Activated naive CD4-positive, alpha-beta T cell treated with anti-CD3 and anti-CD28 coated beads for 36 hours (primary cell): ENCODE measurements at regions of chr15 and their contacts with region 1.

Region 1: GRCh38 chr15:84955089-84955848 is 26.4 kb upstream of the PDE8A start:
- DNase-seq: peak; percentile 69
- H3K4me3 Mint-ChIP-seq: no peak overlapping the region
- H3K27ac Mint-ChIP-seq: no peak overlapping the region
- H3K4me1 Mint-ChIP-seq: peaks cover 8% of the 10 kb centered on the region
- H3K27me3 Mint-ChIP-seq: peaks cover 4% of the 10 kb centered on the region

Region 2: DNA sequence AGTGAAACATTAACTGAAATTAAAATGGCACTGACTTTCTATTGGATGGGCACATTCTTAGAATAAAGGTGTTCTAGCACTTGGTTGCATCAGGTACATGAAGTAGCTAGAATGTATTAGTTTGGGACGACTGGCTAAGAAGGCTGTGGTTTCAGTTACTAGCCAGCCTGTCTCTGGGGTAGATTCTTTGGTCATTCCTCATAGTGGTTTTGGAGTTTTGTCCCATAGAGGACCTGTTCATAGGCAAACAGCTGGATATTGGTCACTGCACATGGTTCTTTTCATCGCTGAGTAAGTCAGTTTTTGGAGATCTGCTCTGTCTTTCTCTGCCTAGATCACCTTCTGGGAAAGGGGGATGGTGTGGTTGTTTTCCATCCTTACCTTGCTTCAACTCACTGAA is 1246.0 kb before region 1 on chr15:
- CTCF ChIA-PET with region 1: no interaction called
- intact Hi-C with region 1: no loop called
- DNase-seq: no peak
- H3K4me3 Mint-ChIP-seq: no peak overlapping the region
- H3K27ac Mint-ChIP-seq: no peak overlapping the region
- H3K4me1 Mint-ChIP-seq: no peaks in the 10 kb centered on the region
- H3K27me3 Mint-ChIP-seq: peaks cover 6% of the 10 kb centered on the region

Region 3: DNA sequence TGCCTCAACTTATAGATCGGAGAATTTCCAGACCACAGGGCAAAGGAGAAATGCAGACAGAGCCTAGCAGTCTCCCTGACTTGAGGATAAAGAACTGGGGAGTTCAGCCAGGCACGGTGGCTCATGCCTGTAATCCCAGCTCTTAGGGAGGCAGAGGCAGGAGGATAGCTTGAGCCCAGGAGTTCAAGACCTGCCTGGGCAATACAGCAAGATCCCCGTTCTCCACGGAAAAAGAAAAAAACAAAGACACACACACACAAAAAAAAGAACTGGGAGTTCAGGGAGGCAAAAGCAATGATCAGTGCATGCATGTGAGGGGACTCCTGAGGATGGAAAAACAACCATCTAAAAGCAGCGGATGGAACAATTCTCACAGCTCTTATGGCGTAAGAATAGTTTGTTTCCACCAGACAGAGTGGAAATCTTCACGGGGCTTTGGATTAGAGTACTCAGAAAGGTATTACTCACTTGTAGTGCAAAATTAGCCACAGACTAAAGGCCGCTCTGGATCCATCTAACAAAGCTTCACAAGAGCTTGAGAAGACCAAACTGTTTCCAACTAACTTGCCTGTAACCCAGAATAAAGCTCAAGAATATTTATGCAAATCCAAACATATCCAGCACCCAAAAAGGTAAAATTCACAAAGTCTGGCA is 255.6 kb before region 1 on chr15:
- CTCF ChIA-PET with region 1: no interaction called
- intact Hi-C with region 1: no loop called
- DNase-seq: no peak
- H3K4me3 Mint-ChIP-seq: no peak overlapping the region
- H3K27ac Mint-ChIP-seq: peak overlapping the region; percentile 5
- H3K4me1 Mint-ChIP-seq: peaks cover 68% of the 10 kb centered on the region
- H3K27me3 Mint-ChIP-seq: no peaks in the 10 kb centered on the region

Region 4: DNA sequence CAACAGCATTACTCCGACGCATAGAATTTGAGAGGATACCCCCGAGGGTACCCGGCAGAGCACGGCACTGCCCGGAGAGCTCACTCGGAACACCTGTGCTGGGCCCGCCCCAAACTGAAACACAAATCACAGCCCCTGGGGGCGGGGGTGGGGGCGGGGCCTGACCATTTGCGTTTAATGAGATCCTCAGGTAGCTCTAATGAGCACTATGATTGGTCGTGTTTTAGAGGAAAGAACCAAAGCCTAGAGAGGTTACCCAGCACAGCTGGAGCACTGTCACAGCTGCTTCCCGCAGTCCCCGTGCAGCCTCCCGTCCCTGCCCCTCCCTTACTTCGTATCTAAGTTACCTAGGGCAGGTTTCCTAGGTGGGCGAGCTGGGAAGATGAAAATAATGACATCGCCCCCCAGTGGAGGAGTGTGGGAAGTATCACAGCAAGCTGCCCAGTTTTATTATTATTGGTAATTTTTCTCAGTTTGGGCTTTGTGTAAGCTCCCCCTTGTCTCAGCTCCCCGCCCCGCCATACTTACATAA is 213.4 kb after region 1 on chr15:
- CTCF ChIA-PET with region 1: interaction called, 4 read pairs
- intact Hi-C with region 1: loop called (anchors 1 kb)
- DNase-seq: peak; percentile 65
- H3K4me3 Mint-ChIP-seq: no peak overlapping the region
- H3K27ac Mint-ChIP-seq: no peak overlapping the region
- H3K4me1 Mint-ChIP-seq: peaks cover 6% of the 10 kb centered on the region
- H3K27me3 Mint-ChIP-seq: peaks cover 27% of the 10 kb centered on the region